Posterior vena cava (tissue), 2 donors: ENCODE measurements at regions of chr18 and their contacts with region 1.

Region 1: GRCh38 chr18:37484983-37485834 is 80.4 kb downstream of the CELF4 start:
- DNase-seq: no peak

Region 2: DNA sequence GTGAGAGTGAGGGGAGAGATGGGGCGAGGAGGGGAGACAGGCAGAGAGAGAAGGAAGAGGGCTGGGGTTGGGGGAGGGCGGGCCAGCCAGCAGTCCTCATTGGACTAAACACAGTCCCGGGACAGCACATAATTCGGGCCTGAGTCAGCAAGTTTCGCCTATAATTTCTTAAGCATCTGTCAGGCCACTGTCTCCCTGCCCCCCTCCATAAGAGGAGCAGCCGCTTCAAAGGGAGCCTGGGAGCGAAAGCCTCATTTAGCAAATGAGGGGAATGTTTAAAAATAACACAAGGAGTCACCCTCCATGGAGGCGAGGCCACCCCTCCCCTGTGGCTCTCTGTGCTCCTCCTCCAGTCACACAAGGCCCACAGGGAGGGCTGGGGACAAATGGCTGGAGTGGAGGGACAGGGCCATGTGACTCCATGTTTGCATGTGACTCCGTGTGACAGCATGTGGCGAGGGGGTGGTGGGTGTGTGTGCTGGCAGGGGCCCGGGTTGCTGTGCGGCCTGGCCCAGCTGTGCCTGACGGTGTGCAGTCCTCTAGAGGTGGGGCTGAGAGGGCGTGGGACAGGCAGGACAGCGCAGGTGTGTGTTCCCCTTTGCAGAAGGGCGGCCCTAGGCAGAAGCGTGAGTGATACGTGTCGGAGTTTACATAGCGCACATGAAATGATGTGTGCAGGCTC is 82.0 kb before region 1 on chr18:
- intact Hi-C with region 1: loop called in 1 of 2 experiments (anchors 10 kb)
- DNase-seq: peak; percentile 74

Region 3: GRCh38 chr18:37502036-37502435 is 16.8 kb after region 1 on chr18:
- intact Hi-C with region 1: no loop called
- DNase-seq: no peak